ENCODE measurements at regions of chr2 and their contacts with region 1.

Region 1: GRCh38 chr2:225660262-225661131 is 261.0 kb downstream of the NYAP2 start:
- DNase-seq: peak; percentile 78
- H3K4me3 Mint-ChIP-seq: no peak overlapping the region
- H3K27ac Mint-ChIP-seq: no peak overlapping the region
- H3K4me1 Mint-ChIP-seq: no peaks in the 10 kb centered on the region
- H3K27me3 Mint-ChIP-seq: no peaks in the 10 kb centered on the region
- CTCF ChIP-seq: peak; percentile 81

Region 2: DNA sequence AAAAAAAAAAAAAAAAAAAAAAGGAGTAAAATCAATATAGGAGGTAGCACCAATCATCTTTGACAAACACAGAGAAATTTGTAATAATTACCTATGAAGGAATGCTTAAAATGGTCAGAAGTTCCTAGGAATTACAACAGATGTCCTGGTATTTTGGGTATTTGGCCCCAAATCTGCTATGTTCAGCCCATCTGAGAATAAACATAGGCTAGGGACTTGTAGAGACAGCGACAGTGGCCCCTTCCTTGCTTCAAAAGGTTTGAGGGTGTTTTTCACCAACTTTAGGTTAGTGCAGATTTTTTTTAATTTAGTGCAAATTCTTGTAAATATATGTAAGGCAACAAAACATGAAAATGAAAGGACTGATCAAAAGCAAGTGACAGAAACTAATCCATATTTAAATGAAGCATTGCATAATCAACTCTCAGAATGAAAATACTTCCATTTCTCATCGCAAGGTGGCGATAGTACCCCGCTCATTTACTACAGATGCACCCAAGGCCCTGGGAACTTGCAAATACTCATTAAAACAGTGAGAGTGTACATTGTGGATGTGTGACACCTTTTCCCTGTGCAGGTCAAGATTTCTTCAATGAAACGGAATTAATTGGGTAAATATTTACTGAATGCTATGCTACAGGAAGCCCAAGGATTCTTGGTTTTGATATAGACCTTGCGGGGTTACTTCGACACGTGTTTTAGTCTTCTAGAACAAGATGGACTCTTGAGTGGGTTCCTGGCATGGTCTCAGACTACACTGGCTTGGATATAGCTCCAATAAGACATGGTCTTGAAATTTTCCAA is 1303.2 kb before region 1 on chr2:
- CTCF ChIA-PET with region 1: no interaction called
- intact Hi-C with region 1: loop called (anchors 5 kb)
- DNase-seq: peak; percentile 72
- H3K4me3 Mint-ChIP-seq: no peak overlapping the region
- H3K27ac Mint-ChIP-seq: no peak overlapping the region
- H3K4me1 Mint-ChIP-seq: no peaks in the 10 kb centered on the region
- H3K27me3 Mint-ChIP-seq: peaks cover 26% of the 10 kb centered on the region
- CTCF ChIP-seq: peak; percentile 49

Region 3: DNA sequence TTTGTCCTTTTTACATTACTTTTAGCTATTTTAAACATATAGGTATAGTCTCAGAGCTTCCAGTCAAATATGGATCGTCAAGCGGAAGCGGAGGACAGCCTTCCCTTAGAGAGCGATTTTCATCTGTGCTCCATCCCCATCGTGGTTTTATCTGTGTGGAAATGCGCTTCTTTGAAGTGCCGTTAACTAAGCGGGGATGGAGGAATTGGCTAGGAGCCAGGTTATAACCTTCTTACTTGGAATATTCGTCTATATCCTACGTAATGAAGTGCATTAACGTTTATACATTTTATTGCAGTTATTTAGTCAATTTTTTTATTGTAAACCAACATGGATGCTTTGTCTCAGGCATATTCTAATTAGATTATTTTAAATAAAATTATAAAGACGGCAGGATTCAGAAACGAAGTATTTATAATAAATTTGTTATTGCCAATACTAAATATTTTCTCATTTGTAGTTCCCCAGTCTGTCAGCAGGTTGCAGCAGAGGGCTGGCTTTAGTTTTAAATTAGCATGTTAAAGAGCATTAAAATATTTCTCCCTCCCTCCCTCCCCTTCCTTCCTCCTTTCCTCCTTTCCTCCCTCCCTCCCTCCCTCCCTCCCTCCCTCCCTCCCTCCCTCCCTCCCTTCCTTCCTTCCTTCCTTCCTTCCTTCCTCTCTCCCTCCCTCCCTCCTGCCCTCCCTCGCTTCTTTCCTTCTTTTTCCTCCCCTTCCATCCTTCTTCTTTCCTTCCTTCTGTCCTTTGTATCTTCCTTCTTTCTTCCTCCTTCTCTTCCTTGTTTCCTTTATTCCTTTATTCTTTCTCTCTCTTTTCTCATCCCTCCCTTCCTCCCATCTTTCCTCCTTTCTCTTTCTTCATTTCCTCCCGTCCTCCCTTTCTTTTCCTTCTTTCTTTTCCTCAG is 537.7 kb before region 1 on chr2:
- CTCF ChIA-PET with region 1: interaction called, 3 read pairs
- intact Hi-C with region 1: loop called (anchors 1 kb)
- DNase-seq: peak; percentile 38
- H3K4me3 Mint-ChIP-seq: no peak overlapping the region
- H3K27ac Mint-ChIP-seq: peak overlapping the region; percentile 3
- H3K4me1 Mint-ChIP-seq: no peaks in the 10 kb centered on the region
- H3K27me3 Mint-ChIP-seq: peaks cover 6% of the 10 kb centered on the region
- CTCF ChIP-seq: peak; percentile 39

Region 4: DNA sequence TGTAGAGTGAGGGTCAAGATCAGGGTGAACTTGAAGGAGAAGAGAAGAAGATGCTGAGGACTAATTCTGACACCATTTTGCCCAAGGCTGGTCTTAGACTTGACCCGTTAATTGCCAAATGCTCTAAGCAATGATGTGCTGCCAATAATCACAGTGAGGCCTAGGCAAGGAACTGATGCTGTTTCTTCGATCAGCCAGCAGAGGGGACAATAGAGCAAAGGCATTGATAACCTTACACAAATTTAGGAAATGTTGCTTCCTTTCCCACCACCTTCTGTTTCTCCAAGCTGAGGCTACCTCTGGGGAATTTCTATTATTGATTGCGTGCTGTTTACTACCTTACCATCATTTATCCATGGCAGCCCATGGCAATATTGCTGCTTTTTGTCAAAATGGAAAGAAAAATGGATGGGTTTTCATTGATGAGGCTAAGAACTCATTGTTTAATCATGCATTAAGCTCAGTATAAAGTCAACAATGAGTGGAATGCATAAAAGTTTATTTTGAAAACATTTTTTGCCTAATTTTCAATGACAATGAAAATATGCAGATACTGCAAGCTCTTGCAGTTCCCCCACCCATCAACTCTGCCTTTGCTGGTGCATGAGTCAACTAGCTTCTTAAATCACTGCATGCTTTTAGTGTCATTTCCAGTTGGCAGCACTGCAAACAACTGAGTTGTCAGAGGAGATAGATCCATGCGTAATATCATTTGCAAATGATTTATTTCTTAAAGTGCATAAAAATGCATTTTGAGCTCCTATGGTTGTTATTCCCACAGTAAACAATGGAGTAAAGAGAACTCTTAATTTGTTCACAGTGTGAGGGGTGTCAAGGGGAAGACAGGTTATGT is 377.4 kb before region 1 on chr2:
- CTCF ChIA-PET with region 1: interaction called, 5 read pairs
- intact Hi-C with region 1: loop called (anchors 1 kb)
- DNase-seq: peak; percentile 34
- H3K4me3 Mint-ChIP-seq: no peak overlapping the region
- H3K27ac Mint-ChIP-seq: no peak overlapping the region
- H3K4me1 Mint-ChIP-seq: no peaks in the 10 kb centered on the region
- H3K27me3 Mint-ChIP-seq: peaks cover 23% of the 10 kb centered on the region
- CTCF ChIP-seq: peak; percentile 69

Region 5: DNA sequence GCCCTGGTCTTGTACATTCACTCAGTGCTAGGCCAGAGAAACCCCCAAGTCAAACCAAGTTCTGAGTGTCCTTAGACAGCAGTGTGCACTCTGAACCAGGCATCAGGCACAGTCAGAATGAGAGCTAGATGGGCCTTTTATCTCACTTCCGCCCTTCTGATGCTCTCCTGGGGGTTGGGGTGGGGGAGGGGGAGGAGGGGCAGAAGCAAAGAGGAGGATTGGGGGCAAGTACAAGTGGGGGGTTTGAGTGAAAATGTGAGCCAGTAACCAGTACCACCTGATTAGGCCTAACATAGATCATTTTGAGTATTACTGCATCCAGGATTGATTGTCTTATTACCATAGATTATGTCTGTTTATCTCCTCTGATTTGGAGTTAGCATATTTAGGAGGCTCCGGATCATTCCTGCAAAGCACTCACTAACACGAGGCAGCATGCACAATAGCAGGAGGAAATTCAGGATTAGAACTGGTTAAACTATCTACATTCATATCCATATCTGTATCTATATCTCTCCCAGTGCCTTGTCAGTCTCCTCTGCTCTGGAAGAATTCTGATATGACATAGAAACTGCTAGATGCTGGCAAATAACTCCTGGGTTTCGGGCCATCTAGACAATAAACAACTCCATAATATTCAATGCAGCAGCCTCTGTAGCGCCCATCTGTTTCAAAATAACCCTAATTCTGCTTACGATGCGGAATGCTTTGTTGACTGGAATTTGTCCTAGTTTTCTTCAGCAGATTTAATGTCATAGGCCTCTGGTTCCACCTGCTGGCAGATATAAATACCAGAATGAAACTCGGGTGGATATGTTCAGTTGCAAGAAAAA is 1324.5 kb after region 1 on chr2:
- CTCF ChIA-PET with region 1: interaction called, 13 read pairs
- intact Hi-C with region 1: loop called (anchors 1 kb)
- DNase-seq: peak; percentile 40
- H3K4me3 Mint-ChIP-seq: no peak overlapping the region
- H3K27ac Mint-ChIP-seq: no peak overlapping the region
- H3K4me1 Mint-ChIP-seq: no peaks in the 10 kb centered on the region
- H3K27me3 Mint-ChIP-seq: no peaks in the 10 kb centered on the region
- CTCF ChIP-seq: peak; percentile 53

Region 6: GRCh38 chr2:227106845-227107759 is 1446.6 kb after region 1 on chr2:
- CTCF ChIA-PET with region 1: interaction called, 3 read pairs
- intact Hi-C with region 1: loop called (anchors 1 kb)
- DNase-seq: peak; percentile 46
- H3K4me3 Mint-ChIP-seq: no peak overlapping the region
- H3K27ac Mint-ChIP-seq: no peak overlapping the region
- H3K4me1 Mint-ChIP-seq: no peaks in the 10 kb centered on the region
- H3K27me3 Mint-ChIP-seq: no peaks in the 10 kb centered on the region
- CTCF ChIP-seq: peak; percentile 45